Heart left ventricle (tissue), 16 donors: ENCODE measurements at regions of chr2 and their contacts with region 1.

Region 1: DNA sequence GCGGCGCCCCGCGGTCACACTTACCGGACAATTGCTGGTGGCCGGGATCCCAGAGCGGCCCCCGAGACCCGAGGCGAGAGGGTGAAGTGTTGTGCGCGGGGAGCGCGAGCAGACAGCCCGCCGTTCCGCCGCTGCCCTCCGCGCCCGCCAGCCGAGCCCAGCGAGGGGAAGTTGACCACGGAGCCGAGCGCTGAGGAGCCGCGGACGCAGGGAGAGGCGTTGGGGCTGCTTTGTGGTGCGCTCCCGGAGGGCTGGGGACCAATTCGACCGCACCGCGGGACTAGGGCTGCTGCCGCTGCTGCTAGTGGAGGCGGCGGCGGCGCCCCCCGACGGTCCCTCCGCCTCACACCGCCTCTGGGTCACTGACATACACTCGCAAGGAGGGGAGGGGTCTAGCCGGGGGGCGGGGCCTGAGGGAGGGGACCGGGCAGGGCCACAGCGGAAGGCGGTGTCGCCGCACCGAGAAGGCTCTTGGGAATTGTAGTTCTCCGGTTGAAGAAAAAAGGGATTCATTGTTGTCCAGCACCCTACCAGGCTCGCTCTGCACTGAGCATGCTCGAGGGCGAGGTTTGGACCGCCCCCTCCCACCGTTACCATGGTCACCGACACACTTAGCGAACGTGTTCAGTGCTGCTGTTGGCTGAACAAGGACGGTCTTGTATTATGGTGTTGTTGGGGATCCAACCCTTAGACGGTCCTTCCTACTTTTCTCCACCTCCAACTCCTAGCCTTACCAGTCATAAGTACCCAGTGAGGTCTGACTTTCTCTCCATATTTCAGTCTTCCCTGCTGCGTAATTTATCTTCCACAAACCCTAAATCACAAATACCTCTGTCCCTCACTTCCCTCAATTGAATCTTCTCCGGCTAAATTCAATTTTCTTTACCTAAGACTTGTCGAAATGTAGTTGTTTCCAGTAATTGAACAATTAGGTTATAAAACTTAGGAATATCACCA is at the start of gene PELI1:
- DNase-seq: peak; percentile 95 to 97 (median 96)
- ATAC-seq: peak; percentile 99 to 100 (median 100)
- H3K4me3 ChIP-seq: peak within 1 kb of the TSS; percentile 81 to 99 (median 94)
- H3K27ac ChIP-seq: peak within 1 kb of the TSS; percentile 94 to 99 (median 98)
- H3K4me1 ChIP-seq: peaks cover 0 to 32% (median 10%) of the 10 kb centered on the region in 12 donors
- H3K27me3 ChIP-seq: no peaks in the 10 kb centered on the region
- CTCF ChIP-seq: peak in 7 of 12 donors; percentile 21 to 56 (median 39)
- POLR2A ChIP-seq: peak; percentile 91 to 99
- total RNA-seq, gene PELI1: 5.9 to 14.6 (median 7.3) TPM

Region 2: GRCh38 chr2:64045938-64046337 is 98.4 kb before region 1 on chr2:
- intact Hi-C with region 1: loop called in 6 of 10 experiments (anchors 2 to 5 kb)
- DNase-seq: no peak
- ATAC-seq: no peak
- H3K4me3 ChIP-seq: no peak overlapping the region
- H3K27ac ChIP-seq: no peak overlapping the region
- H3K4me1 ChIP-seq: peaks cover 0 to 7% (median 0%) of the 10 kb centered on the region in 12 donors
- H3K27me3 ChIP-seq: no peaks in the 10 kb centered on the region
- CTCF ChIP-seq: no peak
- POLR2A ChIP-seq: no peak

Region 3: DNA sequence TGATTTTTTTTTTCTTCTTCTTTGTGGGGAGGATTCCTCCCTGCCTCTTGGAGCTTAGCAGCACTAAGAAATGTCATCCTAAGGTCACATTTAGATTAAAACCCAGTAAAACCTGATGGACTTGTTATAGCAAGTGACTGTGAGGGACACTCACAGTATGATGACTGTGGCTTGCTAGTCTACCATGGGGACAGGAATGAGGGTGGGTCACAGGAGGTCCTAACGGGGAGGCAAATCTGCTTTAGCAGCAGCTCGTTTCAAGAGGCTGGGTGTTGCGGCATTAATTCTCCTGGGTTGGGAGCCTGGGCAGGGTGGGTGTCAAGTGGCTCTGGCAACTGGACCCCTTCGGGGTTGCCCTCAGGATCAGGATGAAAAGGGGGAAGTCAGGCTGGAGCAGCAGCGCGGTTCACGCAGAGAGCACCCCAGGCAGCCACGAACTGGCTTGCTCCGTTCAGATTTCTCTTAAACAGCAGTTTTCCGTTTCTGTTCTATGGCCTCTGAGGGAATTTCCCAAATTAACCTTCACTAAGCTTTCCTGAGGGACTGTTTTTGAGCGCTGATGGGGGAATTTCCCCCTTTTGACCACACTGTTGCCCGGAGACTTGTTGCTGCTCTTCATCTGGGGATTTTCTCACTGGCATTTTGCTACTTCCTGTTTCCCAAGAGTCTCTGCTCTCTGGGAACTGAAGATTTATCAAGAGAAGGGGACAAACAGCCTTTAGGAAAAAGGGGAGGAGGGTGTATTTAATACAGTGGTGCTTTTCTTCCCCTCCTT is 59.7 kb after region 1 on chr2:
- intact Hi-C with region 1: loop called in 2 of 10 experiments (anchors 5 to 10 kb)
- DNase-seq: peak; percentile 23 to 74 (median 42)
- ATAC-seq: peak; percentile 34 to 73 (median 58)
- H3K4me3 ChIP-seq: peak overlapping the region in 9 of 12 donors; percentile 0 to 35 (median 24)
- H3K27ac ChIP-seq: peak overlapping the region; percentile 48 to 87 (median 74)
- H3K4me1 ChIP-seq: peaks cover 0 to 50% (median 30%) of the 10 kb centered on the region in 12 donors
- H3K27me3 ChIP-seq: no peaks in the 10 kb centered on the region
- CTCF ChIP-seq: no peak
- POLR2A ChIP-seq: no peak

Region 4: DNA sequence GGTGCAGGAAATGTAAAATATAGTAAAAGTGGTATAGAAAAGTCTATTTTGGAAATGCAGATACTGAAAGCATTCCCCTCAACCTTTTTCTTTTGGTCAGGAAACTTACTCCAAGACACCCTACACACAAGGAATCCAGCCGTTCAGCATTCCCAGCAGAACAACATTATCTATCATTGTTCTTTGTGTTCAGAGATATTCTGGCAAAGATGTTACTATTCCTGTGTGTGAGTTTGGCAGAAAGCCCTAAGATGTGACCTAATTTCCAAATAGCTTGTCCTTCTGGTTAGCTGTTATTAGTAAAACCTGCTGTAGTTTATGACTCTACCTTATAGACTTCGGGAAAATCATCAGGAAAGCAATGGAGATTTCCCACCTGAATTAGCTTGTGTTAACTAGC is 78.0 kb after region 1 on chr2:
- intact Hi-C with region 1: loop called in 6 of 10 experiments (anchors 5 to 10 kb)
- DNase-seq: peak in 1 of 5 donors; percentile 50
- ATAC-seq: peak; percentile 68 to 83 (median 76)
- H3K4me3 ChIP-seq: no peak overlapping the region
- H3K27ac ChIP-seq: peak overlapping the region in 9 of 12 donors; percentile 10 to 65 (median 37)
- H3K4me1 ChIP-seq: peaks cover 3 to 53% (median 22%) of the 10 kb centered on the region in 12 donors
- H3K27me3 ChIP-seq: no peaks in the 10 kb centered on the region
- CTCF ChIP-seq: no peak
- POLR2A ChIP-seq: no peak

Region 5: GRCh38 chr2:64311948-64312621 is 167.8 kb after region 1 on chr2:
- intact Hi-C with region 1: loop called in 4 of 10 experiments (anchors 2 to 10 kb)
- DNase-seq: peak; percentile 75 to 83 (median 79)
- ATAC-seq: peak; percentile 73 to 97 (median 94)
- H3K4me3 ChIP-seq: peak overlapping the region in 6 of 12 donors; percentile 2 to 40 (median 24)
- H3K27ac ChIP-seq: peak overlapping the region in 10 of 12 donors; percentile 12 to 69 (median 43)
- H3K4me1 ChIP-seq: peaks cover 0 to 26% (median 15%) of the 10 kb centered on the region in 12 donors
- H3K27me3 ChIP-seq: no peaks in the 10 kb centered on the region
- CTCF ChIP-seq: peak; percentile 35 to 71 (median 52)
- POLR2A ChIP-seq: no peak